Esophagus muscularis mucosa (tissue), 4 donors: ENCODE measurements at regions of chr18 and their contacts with region 1.

Region 1: GRCh38 chr18:59837586-59837985 is 62.2 kb upstream of the PMAIP1 start:
- DNase-seq: no peak
- H3K4me3 ChIP-seq: no peak overlapping the region
- H3K27ac ChIP-seq: no peak overlapping the region
- H3K4me1 ChIP-seq: no peaks in the 10 kb centered on the region
- H3K27me3 ChIP-seq: peaks cover 0 to 5% (median 0%) of the 10 kb centered on the region in 4 donors
- CTCF ChIP-seq: peak; percentile 65 to 82 (median 77)
- EP300 ChIP-seq: no peak
- POLR2A ChIP-seq: no peak

Region 2: DNA sequence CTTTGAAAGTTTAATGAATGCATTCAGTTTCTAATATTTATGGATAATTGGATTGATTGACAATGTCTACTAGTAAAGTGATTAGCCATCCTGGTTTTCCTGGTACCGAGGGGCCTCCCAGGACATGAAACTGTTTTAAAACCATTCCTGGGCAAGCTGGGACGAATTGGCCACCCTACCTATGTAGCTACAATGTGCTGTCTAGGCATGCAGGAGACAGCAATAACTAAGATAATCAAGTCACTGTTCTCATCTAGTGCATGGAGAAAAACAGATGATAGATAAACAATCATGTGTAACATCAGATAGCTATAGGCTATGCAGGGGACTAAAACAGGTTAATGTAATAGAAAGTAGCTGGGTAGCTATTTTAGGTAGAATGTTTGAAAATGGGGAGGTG is 129.3 kb after region 1 on chr18:
- intact Hi-C with region 1: no loop called
- DNase-seq: no peak
- H3K4me3 ChIP-seq: no peak overlapping the region
- H3K27ac ChIP-seq: no peak overlapping the region
- H3K4me1 ChIP-seq: peaks cover 0 to 9% (median 7%) of the 10 kb centered on the region in 4 donors
- H3K27me3 ChIP-seq: peaks cover 0 to 26% (median 9%) of the 10 kb centered on the region in 4 donors
- CTCF ChIP-seq: no peak
- EP300 ChIP-seq: no peak
- POLR2A ChIP-seq: no peak

Region 3: GRCh38 chr18:59980188-59980637 is 142.6 kb after region 1 on chr18:
- intact Hi-C with region 1: loop called (anchors 5 kb)
- DNase-seq: no peak
- H3K4me3 ChIP-seq: no peak overlapping the region
- H3K27ac ChIP-seq: no peak overlapping the region
- H3K4me1 ChIP-seq: no peaks in the 10 kb centered on the region
- H3K27me3 ChIP-seq: no peaks in the 10 kb centered on the region
- CTCF ChIP-seq: no peak
- EP300 ChIP-seq: no peak
- POLR2A ChIP-seq: no peak